H1 (cell line): ENCODE measurements at regions of chr11 and their contacts with region 1.

Region 1: DNA sequence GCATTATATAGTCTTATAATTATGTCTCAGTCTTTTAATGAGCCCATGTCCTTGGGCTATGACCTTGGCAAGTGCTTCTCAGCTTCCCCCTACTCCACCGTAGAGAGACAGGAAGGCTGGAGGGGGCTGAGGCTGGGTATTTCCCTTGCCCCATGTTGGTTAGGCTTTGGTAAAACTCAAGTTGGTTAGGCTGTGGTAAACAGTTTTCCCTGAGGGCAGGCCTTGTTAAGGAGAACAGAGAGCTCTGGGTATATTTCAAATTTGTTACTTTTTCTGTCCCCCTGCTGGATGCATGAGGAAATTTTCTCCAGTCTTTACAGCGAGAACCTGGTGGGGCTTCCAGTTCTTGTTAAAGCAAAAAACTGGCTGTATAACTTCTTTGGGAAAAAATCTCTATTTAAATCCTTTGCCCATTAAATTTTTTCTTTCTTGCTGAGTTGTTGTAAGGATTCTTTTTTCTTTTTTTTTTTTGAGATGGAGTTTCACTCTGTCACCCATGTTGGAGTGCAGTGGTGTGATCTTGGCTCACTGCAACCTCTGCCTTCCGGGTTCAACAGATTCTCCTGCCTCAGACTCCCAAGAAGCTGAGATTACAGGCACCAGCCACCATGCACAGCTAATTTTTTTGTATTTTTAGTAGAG is 12.2 kb upstream of the DCHS1 start:
- DNase-seq: no peak
- H3K4me3 ChIP-seq: no peak overlapping the region
- H3K27ac ChIP-seq: no peak overlapping the region
- H3K4me1 ChIP-seq: no peaks in the 10 kb centered on the region
- H3K27me3 ChIP-seq: 0 out of 7 replicates have a peak, but pooled peaks cover 0 to 3% (median 0%) of the 10 kb centered on the region in 4 experiments
- CTCF ChIP-seq: peak in 2 of 3 experiments; percentile 50 to 65; a peak in 2 of 4 replicates
- EP300 ChIP-seq: no peak
- POLR2A ChIP-seq: no peak
- RAD21 ChIP-seq: peak; percentile 39 to 50

Region 2: GRCh38 chr11:6516865-6517264 is 151.0 kb before region 1 on chr11:
- CTCF ChIA-PET with region 1: no interaction called
- POLR2A ChIA-PET with region 1: no interaction called
- DNase-seq: no peak
- H3K4me3 ChIP-seq: no peak overlapping the region
- H3K27ac ChIP-seq: no peak overlapping the region
- H3K4me1 ChIP-seq: no peaks in the 10 kb centered on the region
- H3K27me3 ChIP-seq: no peaks in the 10 kb centered on the region; a peak in 1 of 7 replicates
- CTCF ChIP-seq: no peak
- EP300 ChIP-seq: no peak
- POLR2A ChIP-seq: no peak
- RAD21 ChIP-seq: no peak

Region 3: DNA sequence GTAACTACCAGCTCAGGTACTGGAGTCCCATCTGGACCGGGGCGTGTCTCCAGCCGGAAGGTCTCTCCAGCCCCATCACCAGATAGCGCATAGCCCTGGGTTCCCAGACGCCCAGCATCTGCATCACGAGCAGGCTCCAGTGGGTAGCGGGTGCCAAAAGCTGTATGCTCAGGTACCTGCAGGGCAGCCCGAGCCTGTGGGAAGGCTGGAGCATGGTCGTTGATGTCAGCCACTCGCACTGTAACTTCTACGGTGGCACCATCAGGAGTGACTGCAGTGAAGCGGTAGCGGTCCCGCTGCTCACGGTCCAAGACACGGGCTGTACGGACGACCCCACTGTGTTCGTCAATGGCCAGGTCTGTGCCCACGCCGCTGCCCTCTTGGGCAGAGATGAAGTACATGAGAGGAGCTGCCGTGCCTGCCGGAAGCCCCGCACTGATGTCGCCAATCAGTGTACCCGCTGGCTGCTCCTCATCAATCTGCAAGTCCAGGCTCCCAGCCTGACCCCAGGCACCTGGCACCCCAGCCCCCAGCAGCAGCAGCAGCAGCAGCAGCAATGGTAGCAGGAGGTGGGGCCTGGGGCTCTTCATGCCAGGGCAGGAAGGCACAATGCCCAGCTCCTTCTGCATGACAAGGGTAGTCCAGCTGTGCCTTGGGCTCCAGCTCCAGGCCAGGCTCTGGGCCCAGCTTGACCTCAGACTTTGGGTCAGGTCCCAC is 26.7 kb before region 1 on chr11:
- CTCF ChIA-PET with region 1: interaction called, 10 read pairs
- POLR2A ChIA-PET with region 1: no interaction called
- DNase-seq: no peak
- H3K4me3 ChIP-seq: no peak overlapping the region
- H3K27ac ChIP-seq: no peak overlapping the region
- H3K4me1 ChIP-seq: no peaks in the 10 kb centered on the region
- H3K27me3 ChIP-seq: no peaks in the 10 kb centered on the region; a peak in 1 of 7 replicates
- CTCF ChIP-seq: no peak
- EP300 ChIP-seq: no peak
- POLR2A ChIP-seq: no peak
- RAD21 ChIP-seq: no peak

Region 4: DNA sequence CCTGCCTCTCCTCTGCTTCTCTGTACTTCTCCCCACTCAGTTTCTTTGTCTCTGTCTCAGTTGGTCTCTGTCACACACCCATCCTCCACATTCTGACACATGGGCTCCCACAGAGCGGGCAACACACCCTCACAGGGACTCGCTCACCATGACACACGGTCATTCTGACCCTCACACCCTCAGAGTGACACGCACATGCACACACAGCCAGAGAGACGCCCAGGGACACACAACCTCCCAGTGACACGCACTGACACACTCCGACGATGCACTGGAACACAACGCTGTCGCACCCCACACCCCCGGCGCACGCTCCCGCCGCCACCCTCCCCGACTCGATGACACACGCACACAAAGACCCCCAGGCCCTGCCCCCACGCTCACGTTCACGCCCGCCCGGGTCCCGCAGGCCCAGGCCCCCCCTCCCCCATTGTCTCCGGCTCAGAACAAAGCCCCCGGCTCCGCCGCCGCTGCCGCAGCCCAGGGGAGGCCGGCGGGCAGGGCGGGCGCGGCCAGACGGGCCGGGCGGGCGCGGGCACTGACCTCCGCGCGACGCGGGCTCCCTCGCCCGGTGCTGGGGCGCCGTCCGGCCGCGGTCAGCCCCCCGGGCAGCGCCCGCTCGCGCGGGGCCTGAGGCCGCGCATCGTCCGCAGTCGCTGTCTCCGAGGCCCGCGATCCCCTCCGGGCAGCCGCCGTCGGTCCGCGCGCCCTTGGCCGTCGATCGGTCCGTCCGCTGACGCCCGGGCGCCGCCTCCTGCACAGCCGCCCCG is 12.6 kb before region 1 on chr11:
- CTCF ChIA-PET with region 1: interaction called, 36 read pairs
- POLR2A ChIA-PET with region 1: interaction called, 3 read pairs
- DNase-seq: peak in 1 of 2 experiments; percentile 52
- H3K4me3 ChIP-seq: peak overlapping the region; percentile 30 to 65 (median 46)
- H3K27ac ChIP-seq: no peak overlapping the region
- H3K4me1 ChIP-seq: peaks cover 0 to 7% (median 6%) of the 10 kb centered on the region in 4 experiments; a peak in 4 of 7 replicates
- H3K27me3 ChIP-seq: peaks cover 1 to 36% (median 32%) of the 10 kb centered on the region in 4 experiments
- CTCF ChIP-seq: no peak
- EP300 ChIP-seq: no peak
- POLR2A ChIP-seq: no peak
- RAD21 ChIP-seq: no peak

Region 5: DNA sequence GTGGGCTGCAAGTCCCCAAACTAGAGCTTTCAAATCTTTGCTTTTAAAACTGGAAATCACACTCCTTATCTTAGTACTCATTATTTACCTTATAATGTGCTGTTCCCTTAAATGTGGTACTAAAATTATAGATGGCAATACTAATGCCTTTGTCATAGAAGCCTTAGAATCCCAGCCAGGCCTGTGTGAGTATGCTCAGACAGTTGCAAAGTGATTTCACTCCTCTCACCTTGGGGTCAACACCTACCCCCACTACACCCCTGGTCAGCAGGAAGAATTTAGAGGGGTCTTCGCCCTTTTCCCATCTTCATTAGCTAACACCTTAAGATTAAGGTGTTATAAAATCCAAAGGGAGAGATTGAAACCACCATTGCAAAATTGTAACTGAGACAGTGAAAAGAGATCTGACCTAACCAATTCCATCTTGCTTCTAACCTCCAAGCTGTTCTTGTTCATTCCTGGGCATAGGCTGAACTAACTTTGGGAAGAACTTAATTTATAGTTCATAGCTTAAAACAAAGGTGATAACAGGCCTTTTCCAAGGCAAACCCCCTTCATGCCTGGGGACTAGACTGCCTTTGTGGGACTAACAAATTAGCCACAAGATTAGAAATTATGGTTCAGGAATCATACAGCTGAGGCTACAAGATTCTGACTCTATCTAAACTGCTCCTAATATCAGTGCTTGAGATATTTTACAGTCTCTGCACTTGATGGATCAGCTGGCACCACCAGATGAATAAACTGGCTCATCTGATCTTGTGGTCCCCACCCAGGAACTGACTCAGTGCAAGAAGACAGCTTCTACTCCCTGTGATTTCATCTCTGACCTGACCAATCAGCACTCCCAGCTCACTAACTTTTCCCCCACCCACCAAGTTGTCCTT is 25.7 kb after region 1 on chr11:
- CTCF ChIA-PET with region 1: no interaction called
- POLR2A ChIA-PET with region 1: no interaction called
- DNase-seq: no peak
- H3K4me3 ChIP-seq: no peak overlapping the region
- H3K27ac ChIP-seq: no peak overlapping the region
- H3K4me1 ChIP-seq: no peaks in the 10 kb centered on the region
- H3K27me3 ChIP-seq: no peaks in the 10 kb centered on the region; a peak in 1 of 7 replicates
- CTCF ChIP-seq: no peak
- EP300 ChIP-seq: no peak
- POLR2A ChIP-seq: no peak
- RAD21 ChIP-seq: no peak